Mammary epithelial cell (primary cell): ENCODE measurements at regions of chr7 and their contacts with region 1.

Region 1: DNA sequence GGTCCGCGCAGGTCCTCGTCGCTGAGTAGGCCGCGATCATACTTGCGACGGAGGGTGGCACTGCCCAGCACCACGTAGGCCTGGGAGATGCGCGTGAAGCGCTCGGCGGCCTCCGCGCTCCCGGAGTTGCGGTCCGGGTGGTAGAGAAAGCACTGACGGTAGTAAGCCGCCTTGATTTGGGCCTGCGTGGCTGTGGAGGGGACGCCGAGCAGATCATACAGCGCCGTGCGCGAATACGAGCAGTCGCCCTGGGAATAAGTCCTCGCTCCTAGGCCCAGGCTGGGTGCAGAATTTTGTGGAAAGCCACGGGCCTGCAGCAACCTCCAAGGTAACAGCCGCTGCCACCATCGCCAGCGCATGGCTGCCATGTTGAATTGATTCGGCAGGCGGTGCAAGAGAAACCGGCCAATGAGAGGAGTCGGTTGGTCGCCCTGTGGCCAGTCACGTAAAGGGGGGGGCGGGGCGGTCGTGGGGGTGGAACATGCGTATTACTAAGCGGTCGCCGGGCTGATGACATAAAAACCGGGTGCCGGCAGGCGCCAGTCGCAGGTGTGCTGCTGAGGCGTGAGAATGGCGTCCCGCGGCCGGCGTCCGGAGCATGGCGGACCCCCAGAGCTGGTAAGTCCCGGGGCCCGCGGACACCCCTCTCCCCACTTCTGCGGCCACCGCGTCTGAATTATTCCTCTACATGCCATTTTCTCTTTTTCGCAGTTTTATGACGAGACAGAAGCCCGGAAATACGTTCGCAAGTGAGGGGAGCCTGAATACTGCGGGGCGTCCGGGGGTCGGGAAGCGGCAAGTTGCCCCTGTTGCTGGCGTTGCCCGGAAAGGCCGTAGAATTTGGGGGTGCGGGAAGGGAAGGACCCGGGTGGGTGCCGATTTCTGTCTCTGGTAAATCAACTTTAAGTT is at the starts of genes BUD23 and DNAJC30:
- DNase-seq: peak; percentile 91
- H3K4me3 ChIP-seq: peak within 1 kb of the TSS; percentile 79 to 95 (median 94)
- H3K27ac ChIP-seq: peak within 1 kb of the TSS; percentile 78
- H3K4me1 ChIP-seq: peaks cover 13% of the 10 kb centered on the region
- H3K27me3 ChIP-seq: no peaks in the 10 kb centered on the region
- CTCF ChIP-seq: no peak
- total RNA-seq, gene BUD23: 36.0 to 57.6 TPM
- total RNA-seq, gene DNAJC30: 3.0 to 11.1 TPM

Region 2: GRCh38 chr7:73612598-73613269 is 70.6 kb before region 1 on chr7:
- CTCF ChIA-PET with region 1: no interaction called
- dilution Hi-C with region 1: no loop called
- in situ Hi-C with region 1: no loop called
- intact Hi-C with region 1: loop called (anchors 5 kb)
- DNase-seq: peak; percentile 58
- H3K4me3 ChIP-seq: no peak overlapping the region
- H3K27ac ChIP-seq: no peak overlapping the region
- H3K4me1 ChIP-seq: peaks cover 5% of the 10 kb centered on the region
- H3K27me3 ChIP-seq: no peaks in the 10 kb centered on the region
- CTCF ChIP-seq: peak in 1 of 2 donors; percentile 41

Region 3: GRCh38 chr7:73623798-73624668 is 59.3 kb before region 1 on chr7 and contains the start of gene MLXIPL:
- CTCF ChIA-PET with region 1: interaction called, 8 read pairs
- dilution Hi-C with region 1: no loop called
- in situ Hi-C with region 1: no loop called
- intact Hi-C with region 1: loop called (anchors 5 kb)
- DNase-seq: peak; percentile 62
- H3K4me3 ChIP-seq: peak within 1 kb of the TSS; percentile 39 to 47 (median 46)
- H3K27ac ChIP-seq: no peak within 1 kb of the TSS
- H3K4me1 ChIP-seq: peaks cover 14% of the 10 kb centered on the region
- H3K27me3 ChIP-seq: peaks cover 14% of the 10 kb centered on the region
- CTCF ChIP-seq: no peak
- total RNA-seq, gene MLXIPL: 1.5 TPM in 1 of 2 donors, not detected in the other

Region 4: DNA sequence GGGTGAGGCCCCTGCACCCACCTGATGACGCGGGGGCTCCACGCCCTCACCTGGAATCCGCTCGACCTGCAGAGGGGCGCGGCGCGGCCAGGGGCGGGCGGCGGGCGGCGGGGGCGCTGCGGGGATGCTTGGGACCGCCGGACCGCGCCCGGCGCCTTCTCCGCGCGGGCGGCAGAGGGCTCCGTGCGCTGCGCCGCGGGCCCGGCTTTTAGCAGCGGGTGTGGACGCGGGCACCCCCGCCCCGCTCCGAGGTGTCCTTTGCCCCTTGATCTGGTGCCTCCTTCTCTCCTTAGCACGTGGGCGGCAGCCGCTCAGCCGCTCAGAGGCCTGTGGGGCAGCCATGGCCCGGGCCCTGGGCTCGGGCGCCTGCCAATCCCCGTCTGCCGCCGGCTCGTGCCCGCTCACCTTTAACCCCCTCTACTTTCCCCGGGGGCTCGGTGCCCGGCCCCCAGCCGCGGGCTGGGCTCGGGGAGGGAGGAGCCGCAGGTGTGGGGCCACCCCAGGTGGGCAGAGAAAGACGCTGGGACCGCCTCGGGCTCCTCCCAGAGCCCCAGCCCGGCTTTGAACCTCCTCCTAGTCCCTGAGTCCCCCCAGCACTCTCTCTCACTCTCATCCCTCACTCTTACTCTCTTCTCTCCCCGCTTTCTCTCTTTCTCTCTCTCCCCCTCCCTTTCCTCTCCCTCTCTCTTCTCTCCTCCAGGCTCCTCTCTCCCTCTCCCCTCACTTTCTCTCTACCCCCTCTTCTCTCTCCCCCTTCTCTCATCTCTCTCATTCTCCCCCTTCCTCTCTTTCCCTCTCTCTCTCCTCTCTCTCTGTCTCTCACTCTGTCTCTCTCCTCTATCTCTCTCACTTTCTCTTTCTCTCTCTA is 35.4 kb before region 1 on chr7:
- CTCF ChIA-PET with region 1: no interaction called
- dilution Hi-C with region 1: no loop called
- in situ Hi-C with region 1: no loop called
- intact Hi-C with region 1: loop called (anchors 1 kb)
- DNase-seq: no peak
- H3K4me3 ChIP-seq: peak overlapping the region; percentile 32 to 37 (median 35)
- H3K27ac ChIP-seq: no peak overlapping the region
- H3K4me1 ChIP-seq: peaks cover 8% of the 10 kb centered on the region
- H3K27me3 ChIP-seq: no peaks in the 10 kb centered on the region
- CTCF ChIP-seq: peak in 1 of 2 donors; percentile 13

Region 5: DNA sequence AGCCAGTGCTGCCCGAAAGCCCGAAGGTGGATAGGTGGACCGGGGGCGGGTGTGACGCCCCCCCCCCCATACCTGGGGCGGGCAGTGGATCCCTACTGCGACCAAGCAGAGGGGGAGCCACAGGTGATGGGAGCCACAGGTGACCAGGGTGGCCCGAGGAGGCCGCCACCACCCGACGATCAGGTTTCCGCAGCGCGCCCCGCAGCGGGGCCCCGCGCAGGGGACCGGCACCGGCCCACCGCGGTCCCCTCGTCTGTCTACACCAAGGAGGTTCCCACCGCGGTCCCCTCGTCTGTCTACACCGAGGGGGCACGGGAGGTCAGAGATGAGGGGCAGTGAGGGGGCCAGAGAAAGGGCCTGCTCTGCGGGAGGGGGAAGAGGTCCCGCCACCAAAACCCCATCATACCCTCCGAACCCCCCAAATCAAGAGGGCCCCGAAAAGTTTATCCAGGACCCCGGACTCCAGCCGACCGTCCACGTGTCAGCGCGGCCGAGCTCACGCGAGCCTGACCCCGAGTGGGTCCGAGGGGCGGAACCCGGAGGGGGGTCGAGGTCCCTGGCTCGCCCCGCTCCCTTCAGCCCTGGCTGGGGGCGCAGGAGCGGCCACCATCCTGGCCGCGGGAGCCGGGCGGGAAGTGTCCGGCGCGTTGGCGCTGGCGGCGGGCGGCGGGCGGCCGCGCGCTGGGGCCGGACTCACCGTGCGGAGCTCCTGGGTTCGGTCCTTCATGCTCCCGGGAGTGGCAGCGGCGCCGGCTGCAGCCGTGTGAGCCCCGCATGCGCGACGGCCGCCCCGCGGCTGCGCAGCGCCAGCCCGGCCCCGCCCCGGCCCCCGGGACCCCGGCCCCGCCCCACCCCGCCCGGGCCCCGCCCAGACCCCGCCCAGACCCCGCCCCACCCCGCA is 35.8 kb after region 1 on chr7 and contains the start of gene STX1A:
- CTCF ChIA-PET with region 1: no interaction called
- dilution Hi-C with region 1: no loop called
- in situ Hi-C with region 1: no loop called
- intact Hi-C with region 1: loop called (anchors 2 kb)
- DNase-seq: peak; percentile 58
- H3K4me3 ChIP-seq: peak within 1 kb of the TSS; percentile 84 to 99 (median 92)
- H3K27ac ChIP-seq: peak within 1 kb of the TSS; percentile 68
- H3K4me1 ChIP-seq: peaks cover 45% of the 10 kb centered on the region
- H3K27me3 ChIP-seq: no peaks in the 10 kb centered on the region
- CTCF ChIP-seq: no peak
- total RNA-seq, gene STX1A: 6.8 to 39.7 TPM

Region 6: GRCh38 chr7:73734619-73735527 is 51.6 kb after region 1 on chr7:
- CTCF ChIA-PET with region 1: no interaction called
- dilution Hi-C with region 1: no loop called
- in situ Hi-C with region 1: no loop called
- intact Hi-C with region 1: no loop called
- DNase-seq: peak; percentile 88
- H3K4me3 ChIP-seq: no peak overlapping the region
- H3K27ac ChIP-seq: no peak overlapping the region
- H3K4me1 ChIP-seq: peaks cover 9% of the 10 kb centered on the region
- H3K27me3 ChIP-seq: no peaks in the 10 kb centered on the region
- CTCF ChIP-seq: peak; percentile 78 to 83

Region 7: DNA sequence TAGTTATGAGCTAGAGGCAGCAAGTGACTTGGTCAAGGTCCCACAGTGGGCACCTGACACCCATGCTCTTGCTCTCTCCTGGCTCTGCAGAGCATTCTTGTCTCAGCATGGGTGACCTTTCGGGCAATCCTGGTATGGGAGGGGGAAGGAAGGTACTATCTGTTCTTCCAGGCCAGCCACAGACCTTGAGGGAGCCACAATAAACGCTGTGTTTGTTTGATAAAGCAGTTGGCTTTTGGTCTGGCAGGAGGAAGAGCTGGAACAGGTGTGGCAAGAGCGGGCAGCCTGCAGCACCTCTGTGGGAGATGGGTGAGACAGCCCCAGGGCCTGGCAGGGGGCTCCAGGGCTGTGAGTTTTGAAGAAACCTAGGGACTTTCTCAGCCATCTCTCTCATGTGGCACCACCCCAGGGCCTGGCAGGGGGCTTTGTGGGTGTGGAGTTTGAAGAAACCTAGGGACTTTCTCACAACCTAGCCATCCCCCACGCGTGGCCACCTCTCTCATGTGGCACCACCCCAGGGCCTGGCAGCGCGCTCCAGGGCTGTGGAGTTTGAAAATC is 75.3 kb after region 1 on chr7:
- CTCF ChIA-PET with region 1: no interaction called
- dilution Hi-C with region 1: no loop called
- in situ Hi-C with region 1: no loop called
- intact Hi-C with region 1: no loop called
- DNase-seq: no peak
- H3K4me3 ChIP-seq: no peak overlapping the region
- H3K27ac ChIP-seq: no peak overlapping the region
- H3K4me1 ChIP-seq: no peaks in the 10 kb centered on the region
- H3K27me3 ChIP-seq: no peaks in the 10 kb centered on the region
- CTCF ChIP-seq: no peak